ENCODE measurements at regions of chr17 and their contacts with region 1.

Region 1: GRCh38 chr17:71084219-71084618 is 914.9 kb downstream of the KCNJ2 start:
- DNase-seq: peak in 1 of 2 experiments; percentile 73
- H3K4me3 ChIP-seq: peak overlapping the region in 1 of 4 experiments; percentile 56; a peak in 2 of 8 replicates
- H3K27ac ChIP-seq: no peak overlapping the region
- H3K4me1 ChIP-seq: peaks cover 2 to 6% (median 2%) of the 10 kb centered on the region in 4 experiments; a peak in 4 of 7 replicates
- H3K27me3 ChIP-seq: no peaks in the 10 kb centered on the region
- CTCF ChIP-seq: peak; percentile 42 to 68 (median 65)
- EP300 ChIP-seq: no peak
- POLR2A ChIP-seq: no peak
- RAD21 ChIP-seq: peak; percentile 71 to 75

Region 2: GRCh38 chr17:71110326-71110725 is 26.1 kb after region 1 on chr17:
- CTCF ChIA-PET with region 1: interaction called, 11 read pairs
- POLR2A ChIA-PET with region 1: no interaction called
- DNase-seq: no peak
- H3K4me3 ChIP-seq: no peak overlapping the region
- H3K27ac ChIP-seq: no peak overlapping the region
- H3K4me1 ChIP-seq: no peaks in the 10 kb centered on the region
- H3K27me3 ChIP-seq: no peaks in the 10 kb centered on the region
- CTCF ChIP-seq: no peak
- EP300 ChIP-seq: no peak
- POLR2A ChIP-seq: no peak
- RAD21 ChIP-seq: no peak